Activated CD4-positive, alpha-beta T cell treated with anti-CD3 and anti-CD28 coated beads for 36 hours (primary cell): ENCODE measurements at regions of chr18 and their contacts with region 1.

Region 1: DNA sequence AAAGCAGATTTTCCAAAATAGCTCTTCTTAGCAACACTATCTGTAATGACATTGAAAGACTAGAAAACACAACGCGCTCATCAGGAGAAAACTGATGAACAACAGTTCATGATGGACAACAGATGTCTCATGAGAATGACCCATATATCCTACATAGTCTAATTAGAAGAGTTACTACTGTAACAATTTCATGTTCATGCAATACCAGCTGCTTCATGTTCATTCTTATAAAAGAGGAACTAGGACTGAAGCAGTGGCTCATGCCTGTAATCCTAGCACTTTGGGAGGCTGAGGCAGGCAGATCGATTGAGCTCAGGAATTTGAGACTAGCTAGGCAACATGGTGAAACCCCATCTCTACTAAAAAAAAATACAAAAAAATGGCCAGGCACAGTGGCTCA is 22.7 kb downstream of the TRAPPC8 start:
- DNase-seq: no peak
- ATAC-seq: no peak
- H3K4me3 Mint-ChIP-seq: no peak overlapping the region
- H3K27ac Mint-ChIP-seq: no peak overlapping the region
- H3K4me1 Mint-ChIP-seq: peaks cover 5% of the 10 kb centered on the region
- H3K27me3 Mint-ChIP-seq: no peaks in the 10 kb centered on the region

Region 2: GRCh38 chr18:32078845-32079244 is 158.6 kb after region 1 on chr18:
- CTCF ChIA-PET with region 1: no interaction called
- POLR2A ChIA-PET with region 1: interaction called, 13 read pairs
- intact Hi-C with region 1: no loop called
- DNase-seq: no peak
- ATAC-seq: no peak
- H3K4me3 Mint-ChIP-seq: no peak overlapping the region
- H3K27ac Mint-ChIP-seq: no peak overlapping the region
- H3K4me1 Mint-ChIP-seq: peaks cover 18% of the 10 kb centered on the region
- H3K27me3 Mint-ChIP-seq: no peaks in the 10 kb centered on the region